WTC11 (cell line): ENCODE measurements at regions of chr11 and their contacts with region 1.

Region 1: DNA sequence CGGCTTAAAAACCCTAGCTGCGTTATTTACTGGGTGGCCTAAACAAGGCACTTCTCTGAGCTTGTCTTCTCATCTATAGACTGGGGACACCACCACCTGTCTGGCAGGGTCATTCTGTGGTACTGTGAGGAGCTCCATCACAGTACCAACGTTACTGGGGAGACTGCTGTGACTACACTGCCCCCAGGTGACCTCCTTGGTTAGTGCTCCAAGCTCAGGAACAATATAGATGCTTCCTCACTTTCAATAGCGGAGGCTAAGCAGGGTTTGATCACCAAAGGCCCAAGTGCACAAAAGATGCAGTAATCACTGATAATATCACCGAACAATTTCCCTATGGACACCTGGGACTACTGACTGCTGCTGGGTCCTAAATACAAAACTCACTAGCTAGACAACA is 18.8 kb downstream of the PRPF19 start:
- DNase-seq: peak; percentile 60
- ATAC-seq: peak; percentile 99
- H3K4me3 Mint-ChIP-seq: no peak overlapping the region
- H3K27ac Mint-ChIP-seq: no peak overlapping the region
- H3K4me1 Mint-ChIP-seq: no peaks in the 10 kb centered on the region
- H3K27me3 Mint-ChIP-seq: no peaks in the 10 kb centered on the region
- CTCF ChIP-seq: peak; percentile 35; the same call in 1 of the 2 replicates

Region 2: GRCh38 chr11:60821827-60822599 is 65.5 kb before region 1 on chr11:
- CTCF ChIA-PET with region 1: interaction called, 277 read pairs
- POLR2A ChIA-PET with region 1: no interaction called
- DNase-seq: no peak
- ATAC-seq: no peak
- H3K4me3 Mint-ChIP-seq: no peak overlapping the region
- H3K27ac Mint-ChIP-seq: no peak overlapping the region
- H3K4me1 Mint-ChIP-seq: no peaks in the 10 kb centered on the region
- H3K27me3 Mint-ChIP-seq: peaks cover 1% of the 10 kb centered on the region; the same call in 1 of the 2 replicates
- CTCF ChIP-seq: no peak

Region 3: DNA sequence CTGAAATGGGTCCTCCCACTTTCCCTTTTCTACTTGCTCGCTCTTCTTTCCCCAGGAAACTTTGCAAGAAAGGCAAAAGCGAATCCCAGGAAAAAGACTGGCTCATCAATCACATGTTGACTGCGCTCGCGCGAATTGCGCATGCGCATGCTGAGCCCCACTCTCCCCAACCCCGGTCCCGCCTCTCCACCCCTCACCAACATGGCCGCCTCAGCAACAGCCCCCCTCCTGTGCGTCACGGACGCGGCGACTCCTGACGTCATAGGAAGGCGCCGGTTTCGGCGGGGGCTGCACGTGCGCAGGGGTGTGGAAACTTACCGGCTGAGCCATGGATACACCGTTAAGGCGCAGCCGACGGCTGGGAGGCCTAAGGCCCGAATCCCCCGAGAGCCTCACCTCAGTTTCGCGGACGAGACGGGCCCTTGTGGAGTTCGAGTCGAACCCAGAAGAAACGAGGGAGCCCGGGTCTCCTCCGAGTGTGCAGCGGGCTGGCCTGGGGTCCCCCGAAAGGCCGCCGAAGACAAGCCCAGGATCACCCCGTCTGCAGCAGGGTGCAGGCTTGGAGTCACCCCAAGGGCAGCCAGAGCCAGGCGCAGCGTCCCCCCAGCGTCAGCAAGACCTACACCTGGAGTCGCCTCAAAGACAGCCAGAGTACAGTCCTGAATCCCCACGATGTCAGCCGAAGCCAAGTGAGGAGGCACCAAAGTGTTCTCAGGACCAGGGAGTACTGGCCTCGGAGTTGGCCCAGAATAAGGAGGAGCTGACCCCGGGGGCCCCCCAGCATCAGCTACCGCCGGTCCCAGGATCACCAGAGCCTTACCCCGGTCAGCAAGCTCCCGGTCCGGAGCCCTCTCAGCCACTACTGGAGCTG is 45.5 kb before region 1 on chr11 and contains the start of gene CCDC86:
- CTCF ChIA-PET with region 1: interaction called, 57 read pairs
- POLR2A ChIA-PET with region 1: interaction called, 3 read pairs
- DNase-seq: peak; percentile 97
- ATAC-seq: peak; percentile 86
- H3K4me3 Mint-ChIP-seq: peak within 1 kb of the TSS; percentile 89
- H3K27ac Mint-ChIP-seq: peak within 1 kb of the TSS; percentile 99
- H3K4me1 Mint-ChIP-seq: peaks cover 33% of the 10 kb centered on the region
- H3K27me3 Mint-ChIP-seq: peaks cover 2% of the 10 kb centered on the region; the same call in 1 of the 2 replicates
- CTCF ChIP-seq: no peak
- total RNA-seq, gene CCDC86: 49.4 to 53.5 TPM (median 53.1 TPM) in 3 replicates

Region 4: DNA sequence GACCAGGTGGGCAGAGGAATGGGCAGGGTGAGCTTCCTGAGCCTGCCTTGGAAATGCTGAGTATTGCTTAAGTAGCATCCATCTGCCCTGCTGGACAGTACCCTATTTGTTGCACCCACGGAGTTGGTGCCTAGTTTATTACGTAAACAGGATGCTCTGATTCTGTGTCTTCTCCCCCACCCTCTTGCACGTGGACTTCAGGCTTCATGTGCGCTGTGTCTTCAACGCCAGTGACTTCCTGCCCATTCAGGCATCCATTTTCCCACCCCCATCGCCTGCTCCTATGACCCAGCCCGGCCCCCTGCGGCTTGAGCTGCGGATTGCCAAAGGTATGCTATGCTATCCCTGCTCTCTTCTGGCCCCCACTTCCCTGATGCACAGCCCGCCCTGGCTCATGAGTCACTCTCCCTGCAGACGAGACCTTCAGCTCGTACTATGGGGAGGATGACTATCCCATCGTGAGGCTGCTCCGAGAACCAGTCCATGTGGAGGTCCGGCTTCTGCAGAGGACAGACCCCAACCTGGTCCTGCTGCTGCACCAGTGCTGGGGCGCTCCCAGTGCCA is 14.5 kb before region 1 on chr11:
- CTCF ChIA-PET with region 1: interaction called, 44 read pairs
- POLR2A ChIA-PET with region 1: no interaction called
- DNase-seq: peak; percentile 54
- ATAC-seq: peak; percentile 70
- H3K4me3 Mint-ChIP-seq: no peak overlapping the region
- H3K27ac Mint-ChIP-seq: no peak overlapping the region
- H3K4me1 Mint-ChIP-seq: peaks cover 8% of the 10 kb centered on the region
- H3K27me3 Mint-ChIP-seq: no peaks in the 10 kb centered on the region
- CTCF ChIP-seq: no peak

Region 5: DNA sequence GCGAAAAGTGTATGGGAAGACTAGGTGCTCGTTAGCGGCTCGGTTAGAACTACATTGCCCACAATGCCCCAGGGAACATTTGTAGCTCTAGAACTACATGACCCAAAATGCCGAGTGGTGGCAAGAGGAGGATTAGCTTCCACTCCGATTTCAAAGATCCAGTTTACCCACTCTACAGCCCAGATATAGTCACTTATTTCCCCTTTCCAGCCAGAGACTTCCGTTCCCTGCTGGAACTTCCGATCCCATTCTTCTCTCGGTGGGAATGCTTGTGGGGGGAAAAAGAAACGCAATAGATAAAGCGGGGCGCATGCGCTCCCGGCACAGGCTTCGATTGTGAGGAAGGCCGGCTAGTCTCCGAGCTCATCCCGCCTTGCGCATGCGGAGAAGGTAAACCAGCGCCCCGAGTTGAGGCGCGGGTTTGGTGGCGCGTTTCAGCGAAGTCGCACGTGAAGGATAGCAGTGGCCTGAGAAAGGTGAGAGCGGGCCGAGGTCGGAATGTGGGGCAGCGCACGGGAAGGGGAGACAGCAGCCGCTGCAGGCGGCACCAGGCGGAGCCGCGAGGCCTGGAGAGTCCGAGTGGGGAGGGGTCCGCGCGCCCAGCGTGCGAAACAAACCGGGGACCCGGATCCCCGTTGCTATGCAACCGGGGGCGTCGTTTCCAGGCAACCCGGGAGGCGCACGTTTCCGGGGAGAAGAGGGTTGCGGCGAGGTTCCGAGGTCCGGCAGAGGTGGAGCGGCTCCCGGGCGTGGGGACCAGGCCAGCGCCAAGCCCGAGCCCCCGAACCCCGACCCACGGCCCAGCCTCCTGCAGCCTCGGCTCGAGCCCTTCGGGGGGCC is 26.5 kb after region 1 on chr11 and contains the start of gene TMEM109:
- CTCF ChIA-PET with region 1: interaction called, 13 read pairs
- POLR2A ChIA-PET with region 1: no interaction called
- DNase-seq: peak; percentile 85
- ATAC-seq: peak; percentile 71
- H3K4me3 Mint-ChIP-seq: peak within 1 kb of the TSS; percentile 94
- H3K27ac Mint-ChIP-seq: peak within 1 kb of the TSS; percentile 99
- H3K4me1 Mint-ChIP-seq: peaks cover 49% of the 10 kb centered on the region
- H3K27me3 Mint-ChIP-seq: peaks cover 34% of the 10 kb centered on the region
- CTCF ChIP-seq: no peak
- total RNA-seq, gene TMEM109: 24.1 to 26.8 TPM (median 25.1 TPM) in 3 replicates